Activated CD4-positive, alpha-beta memory T cell treated with anti-CD3 and anti-CD28 coated beads, Interleukin-2, amount 10 ng/mL, durations not matched to agents 7 days and 5 days (primary cell): ENCODE measurements at regions of chr1 and their contacts with region 1.

Region 1: GRCh38 chr1:26373281-26373680 is 731 bp upstream of the ZNF683 start:
- DNase-seq: peak; percentile 67
- H3K4me3 Mint-ChIP-seq: no peak overlapping the region
- H3K27ac Mint-ChIP-seq: peak overlapping the region; percentile 84
- H3K4me1 Mint-ChIP-seq: peaks cover 83% of the 10 kb centered on the region
- H3K27me3 Mint-ChIP-seq: no peaks in the 10 kb centered on the region

Region 2: DNA sequence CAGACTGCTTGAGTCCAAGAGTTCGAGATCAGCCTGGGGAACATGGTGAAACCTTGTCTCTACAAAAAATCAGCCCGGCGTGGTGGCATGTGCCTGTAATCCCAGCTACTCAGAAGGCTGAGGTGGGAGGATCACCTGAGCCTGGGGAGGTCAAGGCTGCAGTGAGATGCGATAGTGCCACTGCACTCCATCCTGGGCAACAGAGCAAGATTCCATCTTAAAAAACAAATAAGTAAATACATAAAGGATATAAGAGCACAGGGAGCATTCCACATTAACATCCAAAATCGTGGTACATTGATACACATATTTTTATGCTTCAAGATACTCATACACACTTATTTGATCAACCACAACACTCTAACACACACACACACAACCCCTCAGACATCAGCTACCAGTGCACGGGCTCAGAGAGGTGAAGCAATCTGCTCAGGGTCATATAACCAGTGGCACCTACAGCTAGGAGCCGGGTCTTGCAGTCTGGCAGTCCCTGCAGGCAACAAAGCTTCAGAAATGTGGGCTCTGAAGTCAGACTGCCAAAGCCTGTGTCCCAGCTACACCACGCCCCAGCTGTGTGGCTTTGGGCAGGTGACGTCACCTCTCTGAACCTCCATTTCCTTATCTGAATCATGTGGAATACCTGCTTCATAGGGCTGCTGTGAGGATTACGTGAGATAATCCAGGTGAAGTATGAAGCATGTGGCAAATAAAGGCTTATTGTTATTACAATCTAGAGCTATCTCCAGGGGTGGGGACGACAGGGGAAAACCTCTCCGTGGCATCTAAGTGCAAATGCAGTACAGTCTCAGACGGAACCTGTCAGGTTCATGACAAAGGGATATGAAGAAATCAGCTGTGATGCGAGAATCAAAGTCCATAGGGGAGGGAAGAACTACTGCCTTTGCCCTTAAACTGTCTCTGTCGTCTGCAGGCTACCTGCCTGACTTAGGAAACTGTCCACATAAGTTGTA is 14.6 kb before region 1 on chr1:
- CTCF ChIA-PET with region 1: interaction called, 56 read pairs
- POLR2A ChIA-PET with region 1: interaction called, 16 read pairs
- DNase-seq: peak; percentile 87
- H3K4me3 Mint-ChIP-seq: peak overlapping the region; percentile 14
- H3K27ac Mint-ChIP-seq: peak overlapping the region; percentile 48
- H3K4me1 Mint-ChIP-seq: peaks cover 60% of the 10 kb centered on the region
- H3K27me3 Mint-ChIP-seq: peaks cover 17% of the 10 kb centered on the region

Region 3: GRCh38 chr1:26399034-26399433 is 25.8 kb after region 1 on chr1:
- CTCF ChIA-PET with region 1: interaction called, 12 read pairs
- POLR2A ChIA-PET with region 1: interaction called, 3 read pairs
- DNase-seq: no peak
- H3K4me3 Mint-ChIP-seq: no peak overlapping the region
- H3K27ac Mint-ChIP-seq: no peak overlapping the region
- H3K4me1 Mint-ChIP-seq: peaks cover 4% of the 10 kb centered on the region
- H3K27me3 Mint-ChIP-seq: peaks cover 19% of the 10 kb centered on the region